Heart right ventricle (tissue), 16 donors: ENCODE measurements at regions of chr4 and their contacts with region 1.

Region 1: DNA sequence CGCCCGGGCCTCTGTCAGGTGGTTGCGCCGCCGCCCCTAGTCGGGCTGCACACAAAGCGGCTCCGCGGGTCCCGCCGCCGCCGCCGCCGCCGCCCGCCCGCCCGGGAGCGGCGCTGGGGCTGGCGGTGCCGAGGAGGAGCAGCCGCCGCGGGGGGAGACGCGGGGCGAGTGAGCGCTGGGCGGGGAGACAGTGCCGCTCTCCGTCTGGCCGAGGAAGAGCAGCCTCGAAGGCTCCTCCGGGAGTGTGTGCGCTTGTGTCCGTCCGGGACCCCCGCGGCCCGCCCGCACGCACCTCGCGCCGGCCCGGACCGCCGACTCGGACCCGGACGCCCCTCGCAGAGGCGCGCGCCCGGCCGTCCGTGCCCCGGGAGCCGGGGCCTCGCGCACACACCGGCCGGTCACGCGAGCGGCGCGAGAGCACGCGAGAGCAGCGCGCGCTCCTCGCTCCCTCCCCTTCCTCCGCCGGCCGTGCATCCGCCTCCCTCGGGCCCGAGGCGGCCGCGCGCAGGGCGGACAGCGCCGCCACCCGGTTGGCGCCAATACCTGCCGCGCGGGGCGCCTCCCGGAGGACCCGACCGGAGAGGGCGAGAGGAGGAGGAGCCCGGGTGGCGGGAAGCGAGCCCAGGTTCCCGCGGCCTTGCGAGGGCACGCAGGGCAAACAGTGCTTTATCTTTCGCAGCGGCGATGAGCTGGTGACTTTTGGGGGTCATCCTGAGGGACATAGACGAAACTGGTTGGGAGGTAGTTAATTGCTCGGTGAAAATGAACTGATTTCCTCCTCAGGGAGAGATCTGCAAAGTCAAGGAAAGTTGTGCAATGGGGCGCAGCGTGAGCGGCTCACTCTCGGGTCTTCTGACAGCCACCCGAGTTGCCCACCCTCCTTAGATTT is at the start of gene PDS5A:
- DNase-seq: peak; percentile 86 to 92
- ATAC-seq: peak; percentile 89 to 93 (median 91)
- H3K4me3 ChIP-seq: peak within 1 kb of the TSS; percentile 72 to 98 (median 93)
- H3K27ac ChIP-seq: peak within 1 kb of the TSS; percentile 84 to 96 (median 94)
- H3K4me1 ChIP-seq: peaks cover 0 to 34% (median 20%) of the 10 kb centered on the region in 9 donors
- H3K27me3 ChIP-seq: no peaks in the 10 kb centered on the region
- CTCF ChIP-seq: peak; percentile 74 to 95 (median 87)
- total RNA-seq, gene PDS5A: 22.9 to 36.2 (median 31.0) TPM

Region 2: GRCh38 chr4:39527273-39528060 is 450.3 kb before region 1 on chr4 and contains the start of gene UGDH:
- intact Hi-C with region 1: loop called in 4 of 10 experiments (anchors 5 kb)
- DNase-seq: peak; percentile 96 to 97
- ATAC-seq: peak; percentile 98 to 100 (median 99)
- H3K4me3 ChIP-seq: peak within 1 kb of the TSS; percentile 74 to 98 (median 88)
- H3K27ac ChIP-seq: peak within 1 kb of the TSS; percentile 92 to 99 (median 96)
- H3K4me1 ChIP-seq: peaks cover 0 to 31% (median 21%) of the 10 kb centered on the region in 9 donors
- H3K27me3 ChIP-seq: no peaks in the 10 kb centered on the region
- CTCF ChIP-seq: peak in 5 of 9 donors; percentile 2 to 36 (median 26)
- total RNA-seq, gene UGDH: 10.8 to 27.3 (median 12.5) TPM

Region 3: GRCh38 chr4:39689970-39690369 is 287.8 kb before region 1 on chr4:
- intact Hi-C with region 1: loop called in 5 of 10 experiments (anchors 1 to 5 kb)
- DNase-seq: no peak
- ATAC-seq: no peak
- H3K4me3 ChIP-seq: no peak overlapping the region
- H3K27ac ChIP-seq: no peak overlapping the region
- H3K4me1 ChIP-seq: no peaks in the 10 kb centered on the region
- H3K27me3 ChIP-seq: no peaks in the 10 kb centered on the region
- CTCF ChIP-seq: no peak

Region 4: DNA sequence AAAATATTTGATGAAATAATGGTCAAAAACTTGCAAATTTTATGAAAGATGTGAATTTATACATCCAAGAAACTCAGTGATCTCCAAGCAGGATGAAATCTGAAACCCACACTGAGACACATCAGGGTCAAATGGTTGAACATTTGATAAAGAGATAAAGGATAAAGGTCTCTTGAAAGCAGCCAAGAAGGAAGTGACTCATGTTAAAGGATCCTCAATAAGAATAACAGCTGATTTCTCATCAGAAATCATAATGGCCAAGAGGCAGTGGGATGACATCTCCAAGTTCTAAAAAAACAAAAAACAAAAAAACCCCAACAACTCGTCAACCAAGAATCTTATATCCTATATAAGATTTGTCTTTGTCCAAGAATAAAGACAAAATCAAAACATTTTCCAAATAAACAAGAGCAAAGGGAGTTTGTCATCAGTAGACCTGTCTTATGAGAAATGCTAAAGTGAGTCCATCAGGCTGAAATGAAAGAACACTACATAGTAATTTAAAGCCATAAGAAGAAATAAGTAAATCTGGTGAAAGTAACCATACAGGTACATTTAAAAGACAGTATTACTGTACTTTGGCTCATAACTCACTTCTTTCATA is 121.7 kb before region 1 on chr4:
- intact Hi-C with region 1: no loop called
- DNase-seq: no peak
- ATAC-seq: no peak
- H3K4me3 ChIP-seq: no peak overlapping the region
- H3K27ac ChIP-seq: no peak overlapping the region
- H3K4me1 ChIP-seq: no peaks in the 10 kb centered on the region
- H3K27me3 ChIP-seq: no peaks in the 10 kb centered on the region
- CTCF ChIP-seq: no peak

Region 5: DNA sequence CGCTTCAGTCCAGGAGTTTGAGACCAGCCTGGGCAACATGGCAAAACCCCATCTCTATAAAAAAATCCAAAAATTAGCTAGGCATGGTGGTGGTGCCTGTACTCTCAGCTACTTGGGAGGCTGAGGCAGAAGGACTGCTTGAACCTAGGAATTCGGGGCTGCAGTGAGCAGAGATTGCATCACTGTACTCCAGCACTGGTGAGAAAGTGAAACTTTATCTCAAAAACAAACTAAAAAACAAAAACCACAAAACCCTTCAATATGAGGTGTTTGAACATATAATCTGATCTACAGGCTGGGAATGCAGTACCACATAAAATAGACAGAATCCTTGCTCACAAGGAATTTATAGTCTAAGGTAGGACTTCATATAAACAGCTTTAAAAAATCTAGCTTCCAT is 103.9 kb before region 1 on chr4:
- intact Hi-C with region 1: loop called in 1 of 10 experiments (anchors 10 kb)
- DNase-seq: no peak
- ATAC-seq: no peak
- H3K4me3 ChIP-seq: no peak overlapping the region
- H3K27ac ChIP-seq: no peak overlapping the region
- H3K4me1 ChIP-seq: no peaks in the 10 kb centered on the region
- H3K27me3 ChIP-seq: no peaks in the 10 kb centered on the region
- CTCF ChIP-seq: no peak

Region 6: DNA sequence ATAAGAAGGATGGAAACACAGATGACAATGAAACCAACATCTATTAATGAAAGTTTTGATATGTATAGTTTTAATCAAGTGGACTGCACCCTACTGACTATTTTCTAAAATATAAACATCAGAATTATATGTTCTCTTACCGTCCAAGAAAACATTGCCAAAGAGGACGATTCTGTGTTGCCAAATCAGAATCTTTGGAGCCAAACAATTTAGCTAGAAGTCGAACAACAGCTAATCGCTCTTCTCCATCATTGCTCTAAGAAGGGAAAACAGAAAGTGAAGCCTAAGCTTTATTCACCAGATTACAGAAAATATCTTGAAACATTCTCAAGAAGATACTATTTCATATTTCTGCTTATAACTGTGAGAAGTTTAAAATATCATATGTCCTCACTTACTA is 64.3 kb before region 1 on chr4:
- intact Hi-C with region 1: loop called in 1 of 10 experiments (anchors 10 kb)
- DNase-seq: no peak
- ATAC-seq: no peak
- H3K4me3 ChIP-seq: no peak overlapping the region
- H3K27ac ChIP-seq: no peak overlapping the region
- H3K4me1 ChIP-seq: peaks cover 0 to 5% (median 0%) of the 10 kb centered on the region in 9 donors
- H3K27me3 ChIP-seq: no peaks in the 10 kb centered on the region
- CTCF ChIP-seq: no peak

Region 7: DNA sequence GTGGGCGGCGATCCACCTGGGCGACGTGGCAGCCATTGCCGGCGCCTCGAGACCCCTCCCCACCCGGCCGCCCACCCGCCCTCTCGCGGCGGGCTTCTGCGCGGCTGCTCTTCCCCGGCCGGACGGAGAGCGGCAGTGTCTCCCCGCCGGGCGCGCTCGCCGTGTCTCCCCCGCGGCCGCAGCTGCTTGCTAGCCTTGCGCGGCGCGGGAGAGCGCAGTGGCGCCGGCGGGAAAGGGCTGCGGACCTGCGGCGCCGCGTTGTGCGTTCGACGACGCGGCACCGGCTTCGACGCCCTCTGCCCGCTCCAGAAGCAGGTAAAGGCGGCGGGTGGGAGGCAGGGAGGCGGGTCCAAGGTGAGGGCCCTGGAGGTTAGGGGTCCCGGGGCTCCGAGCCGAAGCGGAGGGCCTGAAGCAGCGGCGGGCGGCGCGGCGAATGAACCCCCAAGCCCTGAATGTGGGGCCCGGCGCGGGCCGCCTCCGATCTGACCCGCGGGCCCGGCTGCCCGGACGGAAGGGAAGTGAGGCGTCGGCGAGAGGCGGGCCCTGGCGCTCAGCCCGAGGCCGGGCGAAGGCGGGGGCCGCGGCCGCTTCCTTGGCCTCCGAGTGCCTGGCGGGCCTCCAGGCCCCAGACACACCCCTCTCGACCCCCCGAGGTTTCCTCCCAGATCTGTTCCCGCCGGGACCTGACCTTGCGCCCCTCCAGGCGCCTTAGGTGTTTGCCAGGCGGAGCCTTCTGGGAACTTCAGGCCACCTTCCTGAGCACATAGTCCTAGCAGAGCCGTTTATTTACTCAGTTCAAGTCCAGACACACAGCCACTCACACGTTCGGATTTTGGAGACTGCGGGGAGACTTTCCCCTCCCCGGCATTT is 79.2 kb after region 1 on chr4 and contains the start of gene N4BP2:
- intact Hi-C with region 1: loop called in 3 of 10 experiments (anchors 2 to 5 kb)
- DNase-seq: peak; percentile 81 to 87
- ATAC-seq: peak; percentile 81 to 92 (median 89)
- H3K4me3 ChIP-seq: peak within 1 kb of the TSS; percentile 57 to 99 (median 94)
- H3K27ac ChIP-seq: peak within 1 kb of the TSS; percentile 98 to 100 (median 100)
- H3K4me1 ChIP-seq: peaks cover 0 to 27% (median 15%) of the 10 kb centered on the region in 9 donors
- H3K27me3 ChIP-seq: no peaks in the 10 kb centered on the region
- CTCF ChIP-seq: peak; percentile 46 to 96 (median 79)
- total RNA-seq, gene N4BP2: 3.0 to 6.9 (median 5.4) TPM